Activated CD4-positive, alpha-beta memory T cell treated with anti-CD3 and anti-CD28 coated beads for 36 hours (primary cell): ENCODE measurements at regions of chr15 and their contacts with region 1.

Region 1: DNA sequence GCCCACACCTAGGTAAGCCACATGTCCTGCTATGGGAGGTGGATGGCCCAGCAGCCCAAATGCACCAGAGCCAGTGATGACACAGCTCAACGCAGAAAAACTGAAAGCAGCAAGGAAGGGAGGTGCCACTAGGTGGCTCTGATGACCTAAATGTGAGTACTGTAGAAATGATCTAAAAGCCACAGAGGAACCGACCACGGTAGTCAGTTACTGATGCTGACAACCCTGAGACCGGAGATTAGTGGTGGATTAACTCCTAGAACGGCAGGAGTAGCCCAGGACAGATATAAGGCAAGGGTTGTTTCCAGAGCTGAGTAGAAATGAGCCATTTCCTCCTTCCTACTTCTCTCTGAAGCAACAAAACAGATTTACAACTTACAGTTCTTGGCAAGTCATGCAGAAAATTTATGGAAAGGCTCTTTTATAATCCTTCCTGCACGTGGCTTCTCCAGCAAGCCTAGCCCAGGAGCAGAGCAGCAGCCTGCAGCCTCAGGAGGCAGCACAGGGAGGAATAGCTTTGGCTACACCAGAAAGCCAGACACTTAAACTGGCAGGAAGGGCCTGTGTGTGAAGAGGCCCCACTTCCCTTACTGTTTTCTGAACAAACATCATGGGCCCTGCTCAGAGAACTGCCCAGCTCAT is 13.1 kb downstream of the FBXL22 start:
- DNase-seq: peak; percentile 89
- H3K4me3 Mint-ChIP-seq: no peak overlapping the region
- H3K27ac Mint-ChIP-seq: peak overlapping the region; percentile 86
- H3K4me1 Mint-ChIP-seq: peaks cover 31% of the 10 kb centered on the region
- H3K27me3 Mint-ChIP-seq: no peaks in the 10 kb centered on the region

Region 2: DNA sequence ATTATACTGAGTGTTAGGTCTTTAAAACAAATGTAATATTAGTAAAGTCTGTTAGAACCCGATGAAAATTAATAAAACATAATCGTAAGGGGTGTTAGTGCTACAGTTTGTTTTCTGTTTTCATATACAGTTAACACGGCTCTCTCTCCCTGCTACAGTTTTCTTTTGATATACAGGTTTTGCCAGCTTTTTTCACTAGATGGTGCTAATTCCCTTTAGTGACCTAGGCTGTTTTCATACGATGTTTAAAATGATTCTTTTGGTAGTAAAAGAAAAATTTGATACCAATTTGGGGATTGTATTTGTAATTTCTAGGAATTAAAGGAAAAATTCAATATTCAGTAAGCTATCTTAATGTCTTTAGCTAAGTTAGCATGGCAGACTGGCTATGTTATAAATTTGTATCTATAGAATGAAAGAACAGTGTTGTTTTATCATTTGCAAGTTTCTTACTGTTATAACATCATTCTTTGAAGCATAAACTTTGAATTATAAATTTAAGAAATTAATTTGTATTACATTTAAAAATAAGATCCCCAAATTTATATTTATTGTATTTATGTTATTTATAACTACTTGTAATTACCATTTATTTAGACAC is 321.4 kb before region 1 on chr15:
- CTCF ChIA-PET with region 1: no interaction called
- POLR2A ChIA-PET with region 1: no interaction called
- intact Hi-C with region 1: no loop called
- DNase-seq: no peak
- H3K4me3 Mint-ChIP-seq: no peak overlapping the region
- H3K27ac Mint-ChIP-seq: no peak overlapping the region
- H3K4me1 Mint-ChIP-seq: peaks cover 7% of the 10 kb centered on the region
- H3K27me3 Mint-ChIP-seq: no peaks in the 10 kb centered on the region

Region 3: DNA sequence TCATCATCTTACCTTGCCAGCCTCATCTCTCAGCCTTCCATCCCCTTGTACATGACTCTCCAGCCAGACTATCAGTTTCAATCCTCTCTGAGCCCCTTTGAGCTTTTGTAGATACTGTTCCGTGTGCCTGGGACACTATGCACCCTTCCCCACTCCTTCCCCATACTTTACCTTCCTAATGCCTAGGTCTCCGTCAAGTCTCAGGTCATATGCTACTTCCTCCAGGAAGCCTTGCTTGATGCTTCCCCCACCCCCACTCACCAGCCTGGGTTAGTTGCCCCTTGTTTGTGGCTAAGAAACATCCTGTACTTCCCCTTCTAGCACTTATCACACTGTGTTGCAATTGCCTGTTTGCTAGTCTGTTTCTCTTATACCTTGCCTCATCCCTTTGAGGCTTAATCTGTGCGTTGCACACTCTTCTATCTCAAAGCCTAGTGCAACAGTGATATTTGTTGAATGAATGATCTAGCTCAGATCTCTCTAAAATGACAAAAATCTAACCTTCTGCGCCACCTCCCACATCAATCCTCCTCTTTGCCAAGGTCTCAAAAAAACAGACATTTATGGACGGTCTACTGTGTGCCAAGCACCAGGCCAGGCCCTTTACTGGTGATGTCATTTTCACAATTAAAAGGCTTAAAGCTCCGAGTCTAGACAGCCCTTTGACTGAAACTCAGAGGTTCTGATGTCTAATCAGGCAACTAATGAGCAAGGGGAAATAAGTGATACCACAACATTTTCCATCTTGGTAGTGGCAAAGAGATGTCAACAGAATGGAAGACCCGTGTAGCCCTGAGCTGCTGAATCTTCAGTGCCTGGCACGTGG is 112.5 kb before region 1 on chr15:
- CTCF ChIA-PET with region 1: interaction called, 3 read pairs
- POLR2A ChIA-PET with region 1: no interaction called
- intact Hi-C with region 1: loop called (anchors 1 kb)
- DNase-seq: peak; percentile 77
- H3K4me3 Mint-ChIP-seq: no peak overlapping the region
- H3K27ac Mint-ChIP-seq: no peak overlapping the region
- H3K4me1 Mint-ChIP-seq: peaks cover 80% of the 10 kb centered on the region
- H3K27me3 Mint-ChIP-seq: no peaks in the 10 kb centered on the region

Region 4: DNA sequence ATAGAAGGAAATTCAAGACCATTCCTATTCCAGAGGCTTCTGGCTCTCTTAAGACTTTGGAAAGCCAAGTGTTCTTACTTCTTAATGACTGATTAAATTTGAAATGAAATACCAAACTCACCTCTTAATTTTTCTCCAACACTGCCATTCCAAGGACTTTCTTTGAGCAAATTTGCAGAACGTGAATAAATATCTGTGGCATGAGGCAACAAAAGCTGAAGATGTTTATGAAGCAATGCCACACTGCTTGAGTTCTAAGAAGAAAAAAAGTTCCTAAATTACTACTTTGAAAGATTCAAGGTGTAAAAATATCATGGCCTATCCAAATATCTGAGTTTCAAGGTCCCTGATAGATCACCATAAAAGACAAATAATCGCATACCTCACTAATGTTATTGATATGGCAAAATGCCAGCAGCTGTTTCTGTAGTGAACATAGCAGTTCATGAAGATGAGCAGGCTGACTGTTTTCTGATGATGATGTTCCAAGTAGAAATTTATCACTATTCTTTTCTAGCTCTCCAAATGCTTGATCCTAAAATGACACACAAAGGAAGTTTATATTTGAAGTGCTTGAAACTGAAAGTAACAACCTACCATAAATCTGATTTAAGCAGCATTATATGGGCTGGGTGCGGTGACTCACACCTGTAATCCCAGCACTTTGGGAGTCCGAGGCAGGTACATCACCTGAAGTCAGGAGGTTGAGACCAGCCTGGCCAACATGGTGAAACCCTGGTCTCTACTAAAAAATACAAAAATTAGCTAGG is 119.0 kb after region 1 on chr15:
- CTCF ChIA-PET with region 1: interaction called, 3 read pairs
- POLR2A ChIA-PET with region 1: no interaction called
- intact Hi-C with region 1: loop called (anchors 5 kb)
- DNase-seq: peak; percentile 63
- H3K4me3 Mint-ChIP-seq: no peak overlapping the region
- H3K27ac Mint-ChIP-seq: peak overlapping the region; percentile 18
- H3K4me1 Mint-ChIP-seq: peaks cover 15% of the 10 kb centered on the region
- H3K27me3 Mint-ChIP-seq: no peaks in the 10 kb centered on the region

Region 5: GRCh38 chr15:63891079-63891767 is 280.9 kb after region 1 on chr15:
- CTCF ChIA-PET with region 1: interaction called, 13 read pairs
- POLR2A ChIA-PET with region 1: no interaction called
- intact Hi-C with region 1: loop called (anchors 1 kb)
- DNase-seq: peak; percentile 85
- H3K4me3 Mint-ChIP-seq: no peak overlapping the region
- H3K27ac Mint-ChIP-seq: no peak overlapping the region
- H3K4me1 Mint-ChIP-seq: peaks cover 40% of the 10 kb centered on the region
- H3K27me3 Mint-ChIP-seq: no peaks in the 10 kb centered on the region

Region 6: DNA sequence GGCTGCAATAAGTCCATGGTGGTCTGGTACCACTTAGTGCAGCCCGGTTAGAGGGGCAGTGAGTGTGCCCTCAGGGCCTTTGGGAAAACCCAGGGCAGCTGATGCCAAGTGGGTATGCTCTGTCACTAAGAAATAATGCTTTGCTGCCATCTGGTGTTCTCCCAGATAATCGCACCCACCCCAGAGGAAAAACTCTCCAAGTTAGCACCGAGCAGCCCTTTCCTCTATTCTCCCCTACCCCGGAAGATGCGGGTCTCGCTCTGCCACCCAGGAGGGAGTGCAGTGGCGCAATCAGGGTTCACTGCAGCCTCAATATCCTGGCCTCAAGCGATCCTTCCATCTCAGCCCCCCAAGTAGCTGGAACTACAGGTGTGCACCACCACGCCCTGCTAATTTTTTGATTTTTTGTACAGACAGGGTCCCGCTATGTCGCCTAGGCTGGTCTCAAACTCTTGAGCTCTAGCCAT is 457.3 kb after region 1 on chr15:
- CTCF ChIA-PET with region 1: interaction called, 32 read pairs
- POLR2A ChIA-PET with region 1: no interaction called
- intact Hi-C with region 1: loop called (anchors 1 kb)
- DNase-seq: peak; percentile 73
- H3K4me3 Mint-ChIP-seq: no peak overlapping the region
- H3K27ac Mint-ChIP-seq: peak overlapping the region; percentile 38
- H3K4me1 Mint-ChIP-seq: peaks cover 4% of the 10 kb centered on the region
- H3K27me3 Mint-ChIP-seq: no peaks in the 10 kb centered on the region